HepG2 (cell line): ENCODE measurements at regions of chr9 and their contacts with region 1.

Region 1: DNA sequence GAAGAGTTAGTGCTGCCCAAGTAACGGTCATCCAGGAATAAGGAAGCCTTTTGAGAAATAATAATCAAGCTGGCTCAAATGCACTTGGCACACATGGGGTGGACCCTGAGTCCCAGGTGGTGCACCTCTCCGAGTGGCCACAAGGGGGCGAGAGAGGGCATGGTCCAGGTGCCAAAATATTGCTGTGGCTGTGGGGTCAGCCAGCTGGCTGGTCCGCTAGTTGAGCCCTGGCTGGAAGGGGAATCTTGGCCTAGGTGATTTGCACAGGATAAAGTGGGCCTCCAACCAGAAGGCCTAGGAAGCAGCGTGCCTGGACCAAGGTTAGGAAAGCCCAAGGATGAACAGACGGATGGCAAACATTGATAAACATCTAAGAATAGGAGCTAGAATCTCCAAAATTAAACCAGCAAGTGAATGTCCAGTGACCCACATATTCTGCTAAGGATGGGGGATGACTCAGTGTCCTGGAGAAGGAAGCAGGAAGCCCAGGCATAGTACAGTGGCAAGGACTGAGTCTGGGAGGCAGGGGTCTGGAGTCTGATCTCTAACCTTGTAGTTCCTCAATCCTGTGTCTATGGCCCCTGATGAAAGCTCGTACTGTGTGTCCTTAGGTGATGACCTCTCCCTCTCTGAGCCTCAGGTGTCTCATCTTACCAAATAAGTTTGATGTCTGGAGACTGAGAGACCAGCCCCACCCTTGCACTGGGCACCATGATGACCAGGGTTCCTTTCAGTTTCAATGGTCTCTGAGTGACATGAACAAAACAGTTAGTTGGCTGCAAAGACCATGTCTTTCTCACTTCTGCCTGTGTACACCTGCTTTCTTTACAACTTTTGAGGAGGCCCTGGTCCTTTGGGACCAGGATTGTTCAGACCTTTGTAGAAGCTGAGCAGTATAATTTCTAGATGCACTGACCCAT is 19.2 kb upstream of the SHB start:
- DNase-seq: peak; percentile 39
- ATAC-seq: peak; percentile 88
- H3K4me3 ChIP-seq: no peak overlapping the region
- H3K27ac ChIP-seq: no peak overlapping the region
- H3K4me1 ChIP-seq: no peaks in the 10 kb centered on the region; the same call in 1 of the 2 replicates
- H3K27me3 ChIP-seq: peaks cover 4 to 31% of the 10 kb centered on the region in 2 experiments; a peak in 3 of 5 replicates
- CTCF ChIP-seq: peak; percentile 91
- EP300 ChIP-seq: no peak
- POLR2A ChIP-seq: no peak
- RAD21 ChIP-seq: peak; percentile 49; the same call in 1 of the 2 replicates

Region 2: DNA sequence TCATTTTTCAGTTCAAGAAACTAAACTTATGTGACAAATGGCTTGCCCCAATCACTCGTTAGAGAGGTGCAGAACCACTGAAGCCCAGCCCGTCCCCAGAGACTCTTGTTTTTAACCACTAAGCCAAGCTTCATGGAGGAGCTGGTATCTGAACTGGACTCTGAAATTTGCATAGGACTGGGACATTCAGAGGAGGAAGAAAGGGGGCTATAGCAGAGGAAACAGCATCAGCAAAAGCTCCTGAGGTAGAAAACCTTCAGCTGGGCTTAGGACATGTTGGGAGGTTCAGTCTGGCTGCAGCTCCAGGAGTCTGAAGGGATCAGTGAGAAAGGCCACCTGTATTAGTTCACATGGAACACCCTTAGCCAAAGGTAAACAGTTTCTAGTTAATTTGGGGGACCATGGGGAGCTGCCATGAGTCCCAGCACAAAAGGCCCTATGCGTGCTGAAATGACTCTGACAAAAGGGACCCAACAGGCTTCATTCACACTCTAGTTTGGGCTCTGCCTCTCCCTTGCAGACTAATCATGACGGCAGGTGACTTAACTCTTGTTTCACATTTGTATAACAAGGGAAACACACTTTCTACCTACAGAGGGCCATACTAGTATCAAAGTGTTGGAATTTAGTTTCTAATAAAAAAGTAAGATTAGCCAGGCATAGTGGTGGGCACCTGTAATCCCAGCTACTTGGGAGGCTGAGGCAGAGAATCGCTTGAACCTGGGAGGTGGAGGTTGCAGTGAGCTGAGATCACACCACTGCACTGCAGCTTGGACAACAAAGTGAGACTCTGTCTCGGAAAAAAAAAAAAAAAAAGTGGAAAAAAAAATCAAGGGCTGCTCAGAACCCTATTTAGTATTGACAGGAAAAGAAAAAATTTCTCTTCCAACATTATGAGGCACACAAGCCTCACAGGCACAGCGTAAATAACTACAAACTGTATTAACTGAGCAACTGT is 522.3 kb before region 1 on chr9:
- CTCF ChIA-PET with region 1: no interaction called
- POLR2A ChIA-PET with region 1: no interaction called
- in situ Hi-C with region 1: no loop called
- intact Hi-C with region 1: no loop called
- DNase-seq: no peak
- ATAC-seq: no peak
- H3K4me3 ChIP-seq: no peak overlapping the region
- H3K27ac ChIP-seq: no peak overlapping the region
- H3K4me1 ChIP-seq: no peaks in the 10 kb centered on the region
- H3K27me3 ChIP-seq: no peaks in the 10 kb centered on the region
- CTCF ChIP-seq: no peak
- EP300 ChIP-seq: no peak
- POLR2A ChIP-seq: no peak
- RAD21 ChIP-seq: no peak

Region 3: DNA sequence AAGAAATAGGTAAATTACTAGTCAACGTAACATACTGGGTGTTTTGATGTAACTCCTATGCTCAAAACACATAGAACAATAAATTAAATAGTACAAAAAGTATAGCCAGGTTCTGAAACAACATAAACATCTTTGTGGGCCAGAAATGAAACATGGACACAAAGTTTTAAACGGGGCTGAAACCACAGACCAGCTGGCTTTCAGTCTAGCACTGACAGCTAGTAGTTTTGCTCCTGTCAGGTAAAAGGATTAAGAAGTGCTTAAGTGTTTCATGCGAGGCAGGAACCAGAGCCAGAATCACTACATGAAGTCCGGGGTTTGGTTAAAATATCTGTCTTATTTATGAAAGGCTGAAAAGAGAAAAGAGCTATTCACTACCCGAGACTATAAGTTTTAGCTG is 268.1 kb before region 1 on chr9:
- CTCF ChIA-PET with region 1: no interaction called
- POLR2A ChIA-PET with region 1: no interaction called
- in situ Hi-C with region 1: no loop called
- intact Hi-C with region 1: no loop called
- DNase-seq: no peak
- ATAC-seq: no peak
- H3K4me3 ChIP-seq: no peak overlapping the region
- H3K27ac ChIP-seq: no peak overlapping the region
- H3K4me1 ChIP-seq: no peaks in the 10 kb centered on the region
- H3K27me3 ChIP-seq: no peaks in the 10 kb centered on the region
- CTCF ChIP-seq: no peak
- EP300 ChIP-seq: no peak
- POLR2A ChIP-seq: no peak
- RAD21 ChIP-seq: no peak

Region 4: DNA sequence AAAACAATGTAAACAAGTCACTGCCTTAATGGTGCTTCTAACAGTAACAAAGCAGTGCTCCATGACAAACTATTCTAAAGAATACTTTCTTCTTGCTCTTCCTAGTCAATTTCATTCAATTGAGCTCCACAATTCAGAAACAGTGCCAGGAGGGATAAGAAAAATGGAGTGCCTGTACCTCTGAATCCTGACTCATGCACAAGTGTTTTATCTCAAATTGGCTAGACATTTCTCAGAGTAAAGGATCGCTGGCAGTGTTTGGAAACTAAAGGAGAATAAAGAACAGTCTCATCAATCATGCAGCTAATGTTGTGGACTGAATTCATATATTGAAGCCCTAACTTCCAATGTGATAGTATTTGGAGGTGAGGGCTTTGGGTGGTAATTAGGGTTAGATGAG is 211.9 kb before region 1 on chr9:
- CTCF ChIA-PET with region 1: no interaction called
- POLR2A ChIA-PET with region 1: no interaction called
- in situ Hi-C with region 1: no loop called
- intact Hi-C with region 1: no loop called
- DNase-seq: no peak
- ATAC-seq: no peak
- H3K4me3 ChIP-seq: no peak overlapping the region
- H3K27ac ChIP-seq: no peak overlapping the region
- H3K4me1 ChIP-seq: no peaks in the 10 kb centered on the region
- H3K27me3 ChIP-seq: no peaks in the 10 kb centered on the region
- CTCF ChIP-seq: no peak
- EP300 ChIP-seq: no peak
- POLR2A ChIP-seq: no peak
- RAD21 ChIP-seq: no peak

Region 5: GRCh38 chr9:38251036-38251860 is 163.0 kb after region 1 on chr9:
- CTCF ChIA-PET with region 1: no interaction called
- POLR2A ChIA-PET with region 1: no interaction called
- in situ Hi-C with region 1: loop called (anchors 10 kb)
- intact Hi-C with region 1: no loop called
- DNase-seq: no peak
- ATAC-seq: no peak
- H3K4me3 ChIP-seq: no peak overlapping the region
- H3K27ac ChIP-seq: no peak overlapping the region
- H3K4me1 ChIP-seq: peaks cover 18% of the 10 kb centered on the region
- H3K27me3 ChIP-seq: peaks cover 0 to 5% of the 10 kb centered on the region in 2 experiments; a peak in 2 of 5 replicates
- CTCF ChIP-seq: no peak
- EP300 ChIP-seq: no peak
- POLR2A ChIP-seq: no peak
- RAD21 ChIP-seq: no peak

Region 6: DNA sequence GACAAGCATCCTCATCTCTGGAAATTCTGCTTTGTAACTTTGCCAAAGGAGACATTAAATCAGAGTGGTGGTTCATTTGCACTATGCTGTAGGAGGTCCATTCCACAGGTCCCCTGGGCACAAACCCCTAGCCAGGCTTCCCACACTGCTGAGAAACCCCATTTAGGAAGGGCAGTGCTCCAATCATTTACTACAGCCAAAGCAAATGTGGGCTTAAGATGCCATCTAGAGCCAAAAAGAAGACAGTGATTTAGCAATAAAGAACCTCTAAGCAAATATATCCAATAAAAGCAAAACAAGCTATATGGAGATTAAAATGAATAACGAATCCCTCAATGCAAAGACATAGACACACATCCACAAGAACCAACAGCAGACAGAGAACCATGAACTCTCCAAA is 175.3 kb after region 1 on chr9:
- CTCF ChIA-PET with region 1: no interaction called
- POLR2A ChIA-PET with region 1: no interaction called
- in situ Hi-C with region 1: loop called (anchors 10 kb)
- intact Hi-C with region 1: loop called (anchors 1 kb)
- DNase-seq: peak; percentile 7
- ATAC-seq: no peak
- H3K4me3 ChIP-seq: no peak overlapping the region
- H3K27ac ChIP-seq: no peak overlapping the region
- H3K4me1 ChIP-seq: no peaks in the 10 kb centered on the region
- H3K27me3 ChIP-seq: no peaks in the 10 kb centered on the region
- CTCF ChIP-seq: peak; percentile 62
- EP300 ChIP-seq: no peak
- POLR2A ChIP-seq: no peak
- RAD21 ChIP-seq: 0 out of 2 replicates have a peak, but pooled peaks have one; percentile 27